ENCODE measurements at regions of chr17 and their contacts with region 1.

Region 1: GRCh38 chr17:76079956-76080767 is 1.2 kb downstream of the ZACN start:
- DNase-seq: no peak
- H3K4me3 ChIP-seq: no peak overlapping the region
- CTCF ChIP-seq: no peak

Region 2: GRCh38 chr17:76091526-76092285 is 11.5 kb after region 1 on chr17:
- CTCF ChIA-PET with region 1: interaction called, 3 read pairs
- POLR2A ChIA-PET with region 1: interaction called, 17 read pairs
- DNase-seq: no peak
- H3K4me3 ChIP-seq: no peak overlapping the region
- CTCF ChIP-seq: no peak

Measured in AG04449 (cell line).